ENCODE measurements at regions of chr3 and their contacts with region 1.

Region 1: DNA sequence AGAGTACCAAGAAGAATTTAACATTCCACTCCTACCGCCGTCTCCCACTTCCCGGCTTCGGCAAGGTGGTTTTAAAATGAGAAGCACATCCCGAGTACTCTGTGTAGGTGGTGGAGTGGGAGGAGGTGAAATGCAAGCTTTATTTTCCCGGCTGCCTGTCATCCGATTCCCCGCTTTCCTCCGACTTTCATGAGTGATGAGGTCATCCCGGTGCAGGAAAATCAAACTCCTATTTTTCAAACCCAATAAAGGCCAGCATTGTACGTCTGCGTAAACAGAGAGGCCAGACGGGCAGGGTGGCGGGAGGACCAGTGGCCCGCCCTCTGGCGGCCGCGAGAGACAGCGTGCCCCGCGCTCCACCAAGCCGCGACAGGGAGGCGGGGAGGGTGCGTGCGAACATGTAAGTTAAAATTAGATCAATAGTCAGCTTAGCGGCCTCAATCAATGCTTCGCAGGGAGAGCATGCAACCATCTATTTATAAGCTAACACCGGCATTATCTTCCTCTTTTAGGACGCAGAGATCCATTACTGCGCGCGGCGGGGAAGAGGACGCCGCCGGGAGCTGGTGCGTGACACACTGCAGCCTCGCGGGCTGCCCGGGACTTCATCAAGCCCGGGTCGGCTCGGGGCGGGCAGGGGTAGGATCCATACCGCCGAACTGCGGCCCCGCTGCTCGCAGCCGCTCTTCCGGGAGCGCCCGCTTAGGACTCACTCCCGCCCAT is 163.3 kb downstream of the CD47 start:
- DNase-seq: peak; percentile 74 to 79
- H3K4me3 ChIP-seq: peak overlapping the region; percentile 65
- H3K27ac ChIP-seq: no peak overlapping the region
- H3K4me1 ChIP-seq: no peaks in the 10 kb centered on the region
- H3K27me3 ChIP-seq: no peaks in the 10 kb centered on the region
- CTCF ChIP-seq: peak; percentile 99

Region 2: DNA sequence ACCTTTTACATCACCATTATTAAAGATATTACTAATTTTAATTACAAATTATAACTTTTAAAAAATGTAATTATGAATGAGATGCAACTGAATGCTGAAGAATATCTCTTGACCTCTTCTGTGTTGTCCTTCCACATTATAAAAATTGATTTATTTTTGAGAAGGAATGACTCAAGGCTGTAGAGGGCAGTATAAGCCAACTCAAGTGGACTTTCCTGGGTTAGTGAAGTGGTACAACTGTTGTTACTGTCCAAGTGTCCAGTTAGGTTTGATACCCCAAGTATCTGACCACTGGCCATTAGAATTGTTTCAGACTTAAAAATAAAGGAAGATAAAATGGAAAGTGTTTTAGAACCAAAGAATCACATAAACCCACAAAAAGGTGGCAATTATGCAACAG is 352.9 kb before region 1 on chr3:
- CTCF ChIA-PET with region 1: interaction called, 3 read pairs
- POLR2A ChIA-PET with region 1: interaction called, 4 read pairs
- intact Hi-C with region 1: loop called (anchors 10 kb)
- DNase-seq: no peak
- H3K4me3 ChIP-seq: no peak overlapping the region
- H3K27ac ChIP-seq: no peak overlapping the region
- H3K4me1 ChIP-seq: no peaks in the 10 kb centered on the region
- H3K27me3 ChIP-seq: no peaks in the 10 kb centered on the region
- CTCF ChIP-seq: peak; percentile 81

Region 3: DNA sequence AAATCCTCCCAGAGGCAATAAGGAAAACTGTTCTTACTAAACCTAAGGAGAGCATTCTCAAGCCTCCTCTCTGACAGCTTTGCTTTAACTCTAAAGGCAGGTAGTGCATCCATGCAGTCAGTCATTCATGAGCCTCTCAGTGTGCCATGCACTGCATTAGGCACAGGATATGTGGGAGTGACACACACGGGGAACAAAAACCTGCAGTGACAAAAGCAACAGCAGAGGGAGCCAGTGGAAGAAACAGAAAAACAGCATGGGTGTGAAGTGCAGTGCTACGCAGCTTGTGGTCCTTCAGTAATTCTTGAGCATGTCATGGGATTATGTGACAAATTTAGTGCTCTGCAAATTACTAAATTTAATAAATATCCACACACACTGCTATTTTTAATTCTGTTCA is 174.0 kb before region 1 on chr3:
- CTCF ChIA-PET with region 1: no interaction called
- POLR2A ChIA-PET with region 1: no interaction called
- intact Hi-C with region 1: loop called (anchors 1 kb)
- DNase-seq: peak in 1 of 2 experiments; percentile 11
- H3K4me3 ChIP-seq: no peak overlapping the region
- H3K27ac ChIP-seq: no peak overlapping the region
- H3K4me1 ChIP-seq: no peaks in the 10 kb centered on the region
- H3K27me3 ChIP-seq: no peaks in the 10 kb centered on the region
- CTCF ChIP-seq: peak; percentile 67

Region 4: GRCh38 chr3:107987036-107987947 is 59.8 kb after region 1 on chr3:
- CTCF ChIA-PET with region 1: no interaction called
- POLR2A ChIA-PET with region 1: no interaction called
- intact Hi-C with region 1: loop called (anchors 5 kb)
- DNase-seq: peak; percentile 81 to 97
- H3K4me3 ChIP-seq: no peak overlapping the region
- H3K27ac ChIP-seq: peak overlapping the region; percentile 83
- H3K4me1 ChIP-seq: peaks cover 56% of the 10 kb centered on the region
- H3K27me3 ChIP-seq: no peaks in the 10 kb centered on the region
- CTCF ChIP-seq: no peak

Region 5: DNA sequence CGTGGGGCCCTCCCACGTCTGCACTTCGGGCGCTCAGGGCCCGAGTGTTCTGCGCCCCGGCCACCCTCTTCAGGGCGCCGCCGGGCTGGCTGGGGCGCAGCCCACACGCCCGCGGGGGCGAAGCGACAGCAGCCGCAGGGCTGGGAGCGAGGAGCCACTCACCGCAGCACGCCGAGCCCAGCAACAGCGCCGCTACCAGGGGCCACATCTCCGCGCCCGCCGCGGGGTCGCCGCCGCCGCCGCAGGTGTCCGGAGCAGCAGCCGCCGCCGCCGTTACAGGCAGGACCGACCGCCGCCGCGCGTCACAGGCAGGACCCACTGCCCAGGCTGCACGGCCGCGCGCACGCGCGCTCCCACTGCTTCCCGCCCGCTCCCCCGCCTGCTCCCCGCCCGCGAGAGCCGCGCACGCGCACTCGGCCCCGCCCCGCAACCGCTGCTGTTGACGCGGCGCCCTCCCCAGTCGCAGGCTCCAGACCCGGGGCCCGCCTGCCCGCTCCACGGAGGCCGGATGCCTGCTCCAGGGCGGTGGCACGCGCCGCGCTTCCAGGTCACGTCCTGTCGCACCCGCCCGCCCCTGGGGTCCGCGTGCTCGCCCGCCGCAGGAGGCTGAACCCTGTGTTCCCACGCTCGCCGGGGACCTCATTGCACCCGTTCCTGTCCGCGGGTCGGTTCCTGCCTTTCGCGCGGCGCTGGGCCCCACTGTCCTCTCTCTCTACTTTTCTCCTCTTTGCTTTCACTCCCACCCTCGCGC is 163.4 kb after region 1 on chr3 and contains the start of gene CD47:
- CTCF ChIA-PET with region 1: no interaction called
- POLR2A ChIA-PET with region 1: no interaction called
- intact Hi-C with region 1: loop called (anchors 2 kb)
- DNase-seq: peak; percentile 72 to 97
- H3K4me3 ChIP-seq: peak within 1 kb of the TSS; percentile 93
- H3K27ac ChIP-seq: 0 out of 2 replicates have a peak within 1 kb of the TSS, but pooled peaks have one; percentile 0
- H3K4me1 ChIP-seq: peaks cover 32% of the 10 kb centered on the region
- H3K27me3 ChIP-seq: no peaks in the 10 kb centered on the region
- CTCF ChIP-seq: no peak
- total RNA-seq, gene CD47: 74.8 and 76.9 TPM in 2 replicates

Region 6: GRCh38 chr3:108477511-108478147 is 550.1 kb after region 1 on chr3:
- CTCF ChIA-PET with region 1: interaction called, 3 read pairs
- POLR2A ChIA-PET with region 1: no interaction called
- intact Hi-C with region 1: loop called (anchors 5 kb)
- DNase-seq: peak; percentile 49 to 58
- H3K4me3 ChIP-seq: no peak overlapping the region
- H3K27ac ChIP-seq: no peak overlapping the region
- H3K4me1 ChIP-seq: peaks cover 24% of the 10 kb centered on the region
- H3K27me3 ChIP-seq: no peaks in the 10 kb centered on the region
- CTCF ChIP-seq: peak; percentile 96